CD8-positive, alpha-beta memory T cell (primary cell): ENCODE measurements at regions of chr4 and their contacts with region 1.

Region 1: DNA sequence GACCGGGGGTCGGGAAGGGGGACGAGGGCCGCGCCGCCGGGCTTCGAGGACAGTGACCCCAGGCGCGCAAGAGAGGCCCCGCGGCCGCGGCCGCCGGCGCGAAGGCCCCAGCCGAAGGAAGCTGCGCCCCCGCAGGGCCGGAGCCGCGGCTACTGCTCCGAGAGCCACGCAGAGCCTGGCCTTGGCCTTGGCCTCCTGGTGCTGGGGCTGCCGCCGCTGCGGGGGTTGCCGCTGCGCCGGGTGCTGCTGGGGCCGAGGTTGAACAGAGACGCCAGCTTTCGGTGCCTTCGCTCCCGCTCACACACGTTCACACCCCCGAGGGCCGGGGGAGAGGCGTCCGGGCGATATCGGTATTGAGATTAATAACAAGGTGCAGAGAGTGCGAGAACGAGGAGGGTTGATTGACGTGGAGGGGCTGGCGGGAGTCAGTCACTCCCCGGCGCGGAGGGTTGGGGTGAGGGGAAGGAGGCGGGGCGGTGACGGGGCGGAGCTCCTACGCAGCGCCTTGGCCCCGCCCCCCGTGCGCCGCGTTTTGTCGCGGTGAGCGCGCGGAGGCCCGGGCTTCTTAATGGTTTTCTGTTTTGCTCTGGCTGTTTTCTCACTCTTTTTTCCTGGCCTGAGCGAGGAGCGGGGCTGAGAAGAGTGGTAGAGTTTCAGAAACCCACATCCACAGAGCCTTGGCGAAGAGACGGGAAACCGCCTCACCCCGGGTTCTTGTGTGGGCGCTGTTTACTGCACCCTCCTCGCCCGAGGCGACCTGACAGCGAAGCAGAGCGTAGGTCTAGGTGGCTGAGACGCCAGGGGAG is 878 bp upstream of the CNOT6L start:
- DNase-seq: peak; percentile 90 to 98 (median 97)
- H3K4me3 ChIP-seq: peak overlapping the region; percentile 75
- H3K4me3 Mint-ChIP-seq: peak overlapping the region; percentile 89 to 99 (median 97)
- H3K27ac ChIP-seq: peak overlapping the region; percentile 97
- H3K27ac Mint-ChIP-seq: peak overlapping the region; percentile 94 to 100 (median 99)
- H3K4me1 ChIP-seq: peaks cover 50% of the 10 kb centered on the region
- H3K4me1 Mint-ChIP-seq: peaks cover 50 to 69% (median 62%) of the 10 kb centered on the region in 3 donors
- H3K27me3 ChIP-seq: no peaks in the 10 kb centered on the region
- H3K27me3 Mint-ChIP-seq: peaks cover 0 to 8% of the 10 kb centered on the region in 2 donors

Region 2: DNA sequence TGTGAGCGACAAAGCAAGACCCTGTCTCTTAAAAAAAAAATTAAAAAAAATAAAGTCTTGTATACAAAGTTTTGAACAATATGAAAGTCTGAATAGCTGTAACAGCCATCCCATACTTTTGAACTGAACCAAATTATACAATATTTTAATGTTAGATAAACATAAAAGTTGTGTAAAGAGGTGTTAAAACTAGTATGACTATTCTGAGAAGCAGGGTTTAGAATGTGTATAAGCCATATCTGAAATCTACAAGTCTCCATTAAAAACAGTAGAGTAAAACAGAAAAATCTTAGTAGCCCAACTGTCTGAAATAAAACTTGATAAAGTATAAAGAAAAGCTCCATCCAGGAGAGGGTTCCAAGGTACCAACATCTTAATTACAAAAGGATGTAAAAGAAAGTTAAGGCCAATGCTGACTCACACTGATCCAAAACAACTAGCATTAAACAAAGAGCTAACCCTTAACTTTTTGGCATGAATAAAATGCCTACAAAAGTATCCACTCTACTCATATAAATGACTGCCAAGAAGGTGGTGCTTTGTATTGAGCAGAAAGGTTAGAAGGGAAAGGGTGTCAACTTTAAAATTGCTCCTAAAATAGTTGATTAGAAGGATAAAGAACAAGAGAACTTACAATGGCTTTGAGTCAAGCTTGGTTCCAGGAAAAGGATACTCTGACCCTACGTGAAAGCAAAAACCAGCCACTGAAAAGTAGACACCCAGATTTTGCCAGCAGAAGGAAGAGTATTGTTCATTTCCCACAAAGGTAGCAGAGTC is 19.4 kb before region 1 on chr4:
- CTCF ChIA-PET with region 1: interaction called, 6 read pairs
- POLR2A ChIA-PET with region 1: interaction called, 13 read pairs
- DNase-seq: no peak
- H3K4me3 ChIP-seq: peak overlapping the region; percentile 44
- H3K4me3 Mint-ChIP-seq: peak overlapping the region; percentile 61 to 89 (median 74)
- H3K27ac ChIP-seq: no peak overlapping the region
- H3K27ac Mint-ChIP-seq: peak overlapping the region; percentile 14 to 91 (median 58)
- H3K4me1 ChIP-seq: peaks cover 78% of the 10 kb centered on the region
- H3K4me1 Mint-ChIP-seq: peaks cover 79 to 96% (median 95%) of the 10 kb centered on the region in 3 donors
- H3K27me3 ChIP-seq: no peaks in the 10 kb centered on the region
- H3K27me3 Mint-ChIP-seq: no peaks in the 10 kb centered on the region

Region 3: GRCh38 chr4:77852892-77853495 is 32.9 kb after region 1 on chr4:
- CTCF ChIA-PET with region 1: interaction called, 25 read pairs
- POLR2A ChIA-PET with region 1: interaction called, 394 read pairs
- DNase-seq: peak; percentile 47 to 86 (median 79)
- H3K4me3 ChIP-seq: peak overlapping the region; percentile 43
- H3K4me3 Mint-ChIP-seq: peak overlapping the region; percentile 37 to 88 (median 82)
- H3K27ac ChIP-seq: peak overlapping the region; percentile 83
- H3K27ac Mint-ChIP-seq: peak overlapping the region; percentile 91 to 100 (median 98)
- H3K4me1 ChIP-seq: peaks cover 59% of the 10 kb centered on the region
- H3K4me1 Mint-ChIP-seq: peaks cover 52 to 67% (median 61%) of the 10 kb centered on the region in 3 donors
- H3K27me3 ChIP-seq: no peaks in the 10 kb centered on the region
- H3K27me3 Mint-ChIP-seq: no peaks in the 10 kb centered on the region

Region 4: GRCh38 chr4:77862478-77863216 is 42.6 kb after region 1 on chr4 and contains the start of gene MRPL1:
- CTCF ChIA-PET with region 1: interaction called, 68 read pairs
- POLR2A ChIA-PET with region 1: interaction called, 394 read pairs
- DNase-seq: peak; percentile 81 to 92 (median 91)
- H3K4me3 ChIP-seq: peak within 1 kb of the TSS; percentile 89
- H3K4me3 Mint-ChIP-seq: peak within 1 kb of the TSS; percentile 92 to 97 (median 96)
- H3K27ac ChIP-seq: peak within 1 kb of the TSS; percentile 100
- H3K27ac Mint-ChIP-seq: peak within 1 kb of the TSS; percentile 99 to 100 (median 99)
- H3K4me1 ChIP-seq: peaks cover 34% of the 10 kb centered on the region
- H3K4me1 Mint-ChIP-seq: peaks cover 51 to 86% (median 76%) of the 10 kb centered on the region in 3 donors
- H3K27me3 ChIP-seq: no peaks in the 10 kb centered on the region
- H3K27me3 Mint-ChIP-seq: peaks cover 0 to 12% of the 10 kb centered on the region in 2 donors
- total RNA-seq, gene MRPL1: 88.4 to 93.8 TPM